Left ventricle myocardium inferior (tissue), 1 donor: ENCODE measurements at regions of chr17 and their contacts with region 1.

Region 1: GRCh38 chr17:43483674-43484372 is at the start of gene DHX8:
- DNase-seq: peak; percentile 97
- H3K4me3 ChIP-seq: peak within 1 kb of the TSS; percentile 80
- H3K27ac ChIP-seq: peak within 1 kb of the TSS; percentile 87
- H3K4me1 ChIP-seq: peaks cover 54% of the 10 kb centered on the region
- H3K27me3 ChIP-seq: no peaks in the 10 kb centered on the region
- CTCF ChIP-seq: peak; percentile 100
- total RNA-seq, gene DHX8: 26.0 TPM

Region 2: GRCh38 chr17:43393944-43394482 is 89.8 kb before region 1 on chr17:
- intact Hi-C with region 1: loop called (anchors 2 kb)
- DNase-seq: peak; percentile 86
- H3K4me3 ChIP-seq: peak overlapping the region; percentile 40
- H3K27ac ChIP-seq: peak overlapping the region; percentile 76
- H3K4me1 ChIP-seq: peaks cover 39% of the 10 kb centered on the region
- H3K27me3 ChIP-seq: no peaks in the 10 kb centered on the region
- CTCF ChIP-seq: peak; percentile 93

Region 3: GRCh38 chr17:43530278-43531081 is 46.7 kb after region 1 on chr17:
- intact Hi-C with region 1: no loop called
- DNase-seq: peak; percentile 63
- H3K4me3 ChIP-seq: peak overlapping the region; percentile 47
- H3K27ac ChIP-seq: peak overlapping the region; percentile 69
- H3K4me1 ChIP-seq: peaks cover 60% of the 10 kb centered on the region
- H3K27me3 ChIP-seq: no peaks in the 10 kb centered on the region
- CTCF ChIP-seq: no peak